ENCODE measurements at regions of chr15 and their contacts with region 1.

Region 1: GRCh38 chr15:65916664-65917406 is 47.5 kb downstream of the RAB11A start:
- DNase-seq: peak; percentile 57 to 88 (median 74)

Region 2: DNA sequence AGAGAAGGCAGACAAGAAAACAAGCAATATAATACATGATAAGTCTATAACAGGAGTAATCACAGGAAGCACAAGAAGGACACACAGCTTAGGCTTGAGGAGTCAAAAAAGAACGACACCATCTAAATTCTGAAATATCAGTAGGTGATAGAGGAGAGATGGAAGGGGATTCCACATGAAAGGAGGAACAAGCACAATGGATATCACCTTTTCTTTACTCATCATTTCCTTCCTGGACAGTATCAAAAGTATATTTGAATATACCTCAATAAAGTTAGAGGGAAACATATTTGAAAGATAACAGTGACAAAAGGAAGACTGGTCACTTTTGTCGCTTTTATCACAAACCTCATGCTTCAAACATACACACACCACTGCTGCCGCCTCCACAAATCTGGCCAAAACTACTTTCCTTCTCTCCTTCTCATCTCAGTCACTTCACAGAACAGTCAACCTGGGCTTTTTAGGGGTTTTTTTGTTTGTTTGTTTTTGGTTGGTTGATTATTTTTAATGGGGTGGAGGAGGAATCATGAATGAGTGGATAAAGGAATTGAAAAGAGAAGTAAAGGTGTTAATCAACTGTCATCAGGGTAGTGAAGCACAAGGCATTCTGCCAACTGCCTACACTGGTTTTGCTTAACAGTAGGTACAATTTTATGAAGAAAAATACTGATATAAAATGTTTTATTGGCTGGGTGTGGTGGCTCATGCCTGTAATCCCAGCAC is 143.3 kb before region 1 on chr15:
- intact Hi-C with region 1: no loop called
- DNase-seq: peak in 2 of 42 donors; percentile 9 to 36

Region 3: GRCh38 chr15:65942436-65942835 is 25.6 kb after region 1 on chr15:
- intact Hi-C with region 1: no loop called
- DNase-seq: no peak

Region 4: GRCh38 chr15:66014635-66015182 is 97.9 kb after region 1 on chr15:
- intact Hi-C with region 1: no loop called
- DNase-seq: no peak

Region 5: DNA sequence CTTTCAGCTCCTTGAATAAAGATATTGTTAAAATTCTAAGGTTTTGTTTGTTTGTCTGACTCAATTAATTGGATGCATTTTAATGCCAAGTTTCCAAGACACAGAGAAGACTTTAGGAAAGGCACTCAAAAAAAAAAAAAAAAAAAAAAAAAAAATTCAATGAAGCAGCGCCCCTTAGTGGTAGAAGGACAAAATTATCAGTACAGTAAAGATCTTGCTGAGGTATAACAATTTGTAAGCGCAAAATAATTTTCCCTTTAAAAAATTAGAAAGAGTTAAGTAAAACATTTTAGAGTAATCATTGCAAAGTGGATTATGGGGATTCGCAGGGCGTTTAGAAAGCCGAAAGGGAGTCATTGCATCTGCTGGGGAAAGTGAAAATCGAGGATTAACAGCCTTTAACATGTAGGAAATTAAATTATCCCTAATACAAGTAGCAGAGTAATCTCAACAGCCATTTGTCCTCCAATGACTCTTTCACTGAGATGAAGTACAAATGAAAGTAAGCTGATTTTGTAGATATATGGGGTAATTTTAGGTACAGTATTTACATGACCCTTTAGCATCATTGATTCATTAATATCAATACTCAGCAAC is 370.7 kb after region 1 on chr15:
- intact Hi-C with region 1: loop called (anchors 5 kb)
- DNase-seq: no peak